CD8-positive, alpha-beta T cell (primary cell): ENCODE measurements at regions of chr20 and their contacts with region 1.

Region 1: DNA sequence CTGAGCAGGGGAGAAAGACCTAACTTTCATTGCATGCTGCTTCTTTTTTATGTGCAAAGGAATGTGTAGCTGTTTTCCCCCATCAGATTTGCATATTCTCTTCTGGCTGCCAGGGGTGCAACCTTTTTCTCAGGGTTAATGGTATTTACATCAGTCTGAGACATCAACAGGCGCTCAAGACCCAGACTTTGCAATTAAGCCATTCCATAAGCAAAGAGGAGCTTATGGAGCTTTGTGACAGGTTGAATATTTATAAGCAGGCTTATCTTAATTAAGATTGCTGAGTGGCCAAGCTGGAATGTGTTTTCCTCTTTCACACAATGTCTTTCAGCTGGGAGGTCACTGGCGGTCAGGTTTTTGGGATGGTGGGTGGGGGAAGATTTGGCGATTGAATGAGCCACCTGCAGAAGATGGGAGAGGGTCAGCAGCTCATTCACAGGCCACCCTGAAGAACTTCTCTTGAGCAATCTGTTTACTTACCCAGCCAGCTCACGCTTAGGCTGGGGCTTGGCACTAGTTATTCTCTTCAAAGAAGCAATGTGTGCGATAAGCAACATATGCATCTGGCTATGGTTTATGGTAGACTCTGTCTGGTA is 88.6 kb downstream of the SCP2D1 start:
- DNase-seq: no peak
- ATAC-seq: no peak
- H3K4me3 ChIP-seq: no peak overlapping the region
- H3K4me3 Mint-ChIP-seq: no peak overlapping the region
- H3K27ac ChIP-seq: no peak overlapping the region
- H3K27ac Mint-ChIP-seq: no peak overlapping the region
- H3K4me1 ChIP-seq: no peaks in the 10 kb centered on the region
- H3K4me1 Mint-ChIP-seq: no peaks in the 10 kb centered on the region
- H3K27me3 ChIP-seq: no peaks in the 10 kb centered on the region
- H3K27me3 Mint-ChIP-seq: peaks cover 6% of the 10 kb centered on the region
- CTCF ChIP-seq: no peak

Region 2: DNA sequence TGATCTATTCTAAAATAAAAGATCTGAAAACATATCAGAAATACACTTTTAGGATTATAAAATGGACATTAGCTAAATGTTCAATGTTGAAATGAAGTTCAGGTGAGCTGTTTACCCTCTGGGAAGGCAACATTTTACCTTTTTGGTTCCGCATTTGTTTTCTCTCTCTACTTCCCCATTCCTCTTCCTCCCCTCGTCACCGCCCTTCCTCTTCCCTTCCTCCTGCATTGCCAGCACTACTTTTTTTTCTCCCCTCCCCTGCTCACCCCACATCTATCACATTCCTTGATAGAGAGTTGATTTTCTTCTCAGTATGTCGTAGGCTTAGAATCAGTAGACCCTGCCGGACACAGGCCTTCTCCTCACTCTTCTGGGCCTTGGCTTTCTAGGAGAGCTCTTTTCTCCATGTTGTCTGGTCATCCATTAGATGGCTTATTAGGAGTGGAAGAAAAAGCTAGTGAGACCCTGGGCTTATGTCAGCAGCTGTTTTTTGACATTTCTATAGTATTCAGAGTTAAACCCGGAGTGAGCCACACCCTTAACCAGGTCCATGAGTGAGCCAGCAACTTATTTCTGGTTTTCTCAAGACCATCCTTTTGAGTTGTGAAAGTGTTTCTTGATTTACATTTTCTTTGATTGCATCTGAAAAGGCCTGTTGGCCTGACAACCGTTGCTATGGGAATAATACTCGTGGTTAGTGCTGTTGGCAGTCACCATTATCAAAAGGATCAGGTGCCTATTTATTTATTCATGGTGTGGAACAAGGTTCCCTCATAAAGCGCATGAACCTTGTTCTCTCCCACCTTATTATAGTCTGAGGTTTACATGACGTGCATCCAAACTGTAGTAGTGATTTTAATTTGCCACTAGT is 223.4 kb before region 1 on chr20:
- CTCF ChIA-PET with region 1: no interaction called
- POLR2A ChIA-PET with region 1: no interaction called
- intact Hi-C with region 1: no loop called
- DNase-seq: peak in 1 of 9 experiments; percentile 16
- ATAC-seq: no peak
- H3K4me3 ChIP-seq: no peak overlapping the region
- H3K4me3 Mint-ChIP-seq: no peak overlapping the region
- H3K27ac ChIP-seq: no peak overlapping the region
- H3K27ac Mint-ChIP-seq: peak overlapping the region; percentile 62
- H3K4me1 ChIP-seq: no peaks in the 10 kb centered on the region
- H3K4me1 Mint-ChIP-seq: peaks cover 20% of the 10 kb centered on the region
- H3K27me3 ChIP-seq: no peaks in the 10 kb centered on the region
- H3K27me3 Mint-ChIP-seq: no peaks in the 10 kb centered on the region
- CTCF ChIP-seq: no peak

Region 3: GRCh38 chr20:18886756-18887155 is 15.4 kb before region 1 on chr20:
- CTCF ChIA-PET with region 1: no interaction called
- POLR2A ChIA-PET with region 1: no interaction called
- intact Hi-C with region 1: loop called in 1 of 2 experiments (anchors 1 kb)
- DNase-seq: no peak
- ATAC-seq: no peak
- H3K4me3 ChIP-seq: no peak overlapping the region
- H3K4me3 Mint-ChIP-seq: no peak overlapping the region
- H3K27ac ChIP-seq: no peak overlapping the region
- H3K27ac Mint-ChIP-seq: no peak overlapping the region
- H3K4me1 ChIP-seq: no peaks in the 10 kb centered on the region
- H3K4me1 Mint-ChIP-seq: no peaks in the 10 kb centered on the region
- H3K27me3 ChIP-seq: no peaks in the 10 kb centered on the region
- H3K27me3 Mint-ChIP-seq: peaks cover 6% of the 10 kb centered on the region
- CTCF ChIP-seq: no peak

Region 4: DNA sequence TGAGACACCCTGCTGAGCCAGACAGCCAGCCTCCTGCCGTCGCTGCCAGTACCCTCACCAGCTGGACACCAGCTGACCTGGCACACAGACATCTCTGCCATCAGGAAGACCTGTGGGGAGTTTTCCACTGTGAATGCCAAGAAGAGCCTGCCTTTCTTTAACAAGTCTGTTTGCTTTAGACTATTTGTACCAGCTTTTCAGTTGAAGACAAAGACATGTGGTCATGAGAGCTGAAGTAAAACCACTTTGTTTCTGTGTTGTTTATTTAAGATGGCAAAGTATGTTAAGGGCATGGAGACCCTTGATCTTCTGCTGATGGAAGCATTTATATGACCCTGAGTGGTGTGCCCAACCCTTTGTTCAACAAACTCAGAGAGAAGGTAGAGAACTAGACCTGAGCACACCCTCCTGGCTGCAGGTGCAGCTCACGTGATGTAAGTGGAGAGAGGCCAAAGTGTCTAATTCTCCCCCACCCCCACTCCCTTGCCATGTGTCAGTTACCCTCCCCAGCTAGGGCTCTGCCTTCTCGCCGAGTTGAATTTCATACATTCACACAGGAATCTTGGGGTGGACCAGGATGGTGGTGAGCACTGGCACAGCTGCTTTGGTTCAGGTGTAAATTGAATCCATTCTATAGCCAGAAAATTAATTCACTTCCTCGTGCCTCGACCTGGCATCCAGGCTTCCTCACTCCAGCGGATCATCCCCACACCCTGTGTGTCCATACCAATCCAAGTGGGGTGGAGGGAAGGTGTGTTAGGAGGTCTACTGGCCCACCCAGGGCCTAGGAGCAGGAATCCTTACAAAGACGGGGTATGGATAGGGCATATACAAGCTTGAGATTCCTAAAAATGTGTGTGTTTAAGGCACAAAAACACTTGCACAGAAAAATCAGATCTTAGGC is 228.2 kb after region 1 on chr20:
- CTCF ChIA-PET with region 1: no interaction called
- POLR2A ChIA-PET with region 1: no interaction called
- intact Hi-C with region 1: no loop called
- DNase-seq: no peak
- ATAC-seq: no peak
- H3K4me3 ChIP-seq: no peak overlapping the region
- H3K4me3 Mint-ChIP-seq: no peak overlapping the region
- H3K27ac ChIP-seq: no peak overlapping the region
- H3K27ac Mint-ChIP-seq: no peak overlapping the region
- H3K4me1 ChIP-seq: no peaks in the 10 kb centered on the region
- H3K4me1 Mint-ChIP-seq: no peaks in the 10 kb centered on the region
- H3K27me3 ChIP-seq: no peaks in the 10 kb centered on the region
- H3K27me3 Mint-ChIP-seq: peaks cover 6% of the 10 kb centered on the region
- CTCF ChIP-seq: no peak